Activated CD8-positive, alpha-beta memory T cell treated with anti-CD3 and anti-CD28 coated beads, Interleukin-2, amount 10 ng/mL, durations not matched to agents 7 days and 5 days (primary cell): ENCODE measurements at regions of chr15 and their contacts with region 1.

Region 1: DNA sequence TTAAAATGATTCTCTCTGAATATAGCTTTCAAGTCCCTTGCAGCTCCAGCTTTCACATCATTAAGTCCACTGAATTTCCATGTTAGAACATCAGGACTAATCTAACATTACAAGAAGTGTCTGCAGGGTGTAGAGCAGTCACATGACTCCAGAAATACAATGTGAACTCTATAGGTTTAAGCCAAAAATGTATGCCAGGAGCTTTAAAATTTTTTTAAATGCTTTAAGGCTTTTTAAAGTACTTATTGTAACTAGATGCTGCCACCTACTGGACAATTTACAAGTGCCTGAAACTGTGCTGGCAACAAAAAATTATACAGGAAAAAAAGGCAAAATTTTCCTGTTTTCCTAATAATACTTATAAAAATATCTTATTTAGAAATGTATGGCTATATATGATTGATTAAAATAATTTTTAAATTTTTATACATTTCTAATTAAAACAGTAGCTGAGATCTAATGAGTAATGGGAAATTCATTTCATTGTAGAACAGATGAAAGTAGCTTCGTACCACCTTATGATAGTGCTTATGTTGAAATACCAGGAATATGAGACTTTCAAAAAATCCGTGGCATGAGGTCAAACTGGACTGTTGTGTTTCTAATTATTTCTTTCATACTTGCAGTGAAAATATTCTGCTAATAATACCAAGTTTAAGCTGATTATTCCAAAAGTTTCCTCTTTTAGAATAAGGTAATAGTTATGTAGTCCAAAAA is 25.7 kb downstream of the FSIP1 start:
- DNase-seq: no peak
- ATAC-seq: no peak
- H3K4me3 Mint-ChIP-seq: no peak overlapping the region
- H3K27ac Mint-ChIP-seq: no peak overlapping the region
- H3K4me1 Mint-ChIP-seq: no peaks in the 10 kb centered on the region
- H3K27me3 Mint-ChIP-seq: peaks cover 32% of the 10 kb centered on the region

Region 2: DNA sequence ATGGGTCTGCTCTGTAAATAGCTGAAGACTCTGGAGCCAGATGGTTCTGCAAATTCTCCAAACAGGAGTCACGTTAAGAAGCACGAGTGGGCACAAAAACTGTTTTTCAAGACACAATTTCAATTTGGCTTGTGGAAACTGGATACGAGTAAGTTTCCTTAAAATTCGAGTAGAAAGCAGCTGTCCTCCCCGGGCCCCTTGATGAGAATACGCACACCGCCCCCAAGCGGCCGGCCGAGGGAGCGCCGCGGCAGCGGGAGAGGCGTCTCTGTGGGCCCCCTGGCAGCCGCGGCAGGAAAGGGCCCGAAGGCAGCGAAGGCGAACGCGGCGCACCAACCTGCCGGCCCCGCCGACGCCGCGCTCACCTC is 176.9 kb before region 1 on chr15:
- CTCF ChIA-PET with region 1: interaction called, 85 read pairs
- DNase-seq: peak; percentile 90
- ATAC-seq: peak; percentile 95
- H3K4me3 Mint-ChIP-seq: peak overlapping the region; percentile 35
- H3K27ac Mint-ChIP-seq: no peak overlapping the region
- H3K4me1 Mint-ChIP-seq: peaks cover 15% of the 10 kb centered on the region
- H3K27me3 Mint-ChIP-seq: peaks cover 61% of the 10 kb centered on the region

Region 3: GRCh38 chr15:39594056-39594763 is 162.8 kb before region 1 on chr15:
- CTCF ChIA-PET with region 1: interaction called, 30 read pairs
- DNase-seq: peak; percentile 58
- ATAC-seq: peak; percentile 60
- H3K4me3 Mint-ChIP-seq: no peak overlapping the region
- H3K27ac Mint-ChIP-seq: no peak overlapping the region
- H3K4me1 Mint-ChIP-seq: peaks cover 8% of the 10 kb centered on the region
- H3K27me3 Mint-ChIP-seq: peaks cover 7% of the 10 kb centered on the region

Region 4: DNA sequence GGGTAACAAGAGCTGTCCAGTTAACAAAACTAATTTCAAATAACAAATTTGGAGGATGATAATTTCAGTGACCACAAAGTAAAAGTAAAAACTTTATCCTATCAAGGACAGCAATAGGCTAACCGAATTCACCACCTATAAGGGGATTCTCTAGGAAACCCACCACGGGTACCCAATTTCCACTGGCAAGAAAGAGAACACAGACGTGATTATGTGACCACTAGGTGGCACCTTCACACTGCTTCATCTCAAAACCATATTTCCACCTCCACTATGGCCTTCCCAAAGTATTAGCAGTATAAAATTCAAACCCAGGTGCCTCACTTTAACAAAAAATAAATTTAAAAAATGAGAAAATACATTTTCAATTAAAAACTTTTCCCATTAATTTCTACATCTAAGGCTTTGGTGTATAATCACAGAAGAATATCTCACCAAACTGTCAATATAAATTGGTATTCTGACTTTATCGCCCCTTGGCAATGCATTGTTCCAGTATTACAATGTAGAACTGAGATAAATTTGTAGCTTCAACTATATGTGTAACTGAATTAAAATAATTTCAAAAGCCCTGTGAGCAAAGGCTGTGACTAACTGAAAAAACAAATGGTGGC is 70.9 kb before region 1 on chr15:
- CTCF ChIA-PET with region 1: interaction called, 36 read pairs
- DNase-seq: no peak
- ATAC-seq: peak; percentile 55
- H3K4me3 Mint-ChIP-seq: no peak overlapping the region
- H3K27ac Mint-ChIP-seq: no peak overlapping the region
- H3K4me1 Mint-ChIP-seq: peaks cover 4% of the 10 kb centered on the region
- H3K27me3 Mint-ChIP-seq: no peaks in the 10 kb centered on the region

Region 5: GRCh38 chr15:39770748-39771689 is 14.1 kb after region 1 on chr15:
- CTCF ChIA-PET with region 1: interaction called, 11 read pairs
- DNase-seq: no peak
- ATAC-seq: no peak
- H3K4me3 Mint-ChIP-seq: no peak overlapping the region
- H3K27ac Mint-ChIP-seq: no peak overlapping the region
- H3K4me1 Mint-ChIP-seq: peaks cover 17% of the 10 kb centered on the region
- H3K27me3 Mint-ChIP-seq: no peaks in the 10 kb centered on the region

Region 6: GRCh38 chr15:40038638-40039543 is 281.9 kb after region 1 on chr15 and contains the start of gene SRP14:
- CTCF ChIA-PET with region 1: no interaction called
- DNase-seq: peak; percentile 96
- ATAC-seq: peak; percentile 96
- H3K4me3 Mint-ChIP-seq: peak within 1 kb of the TSS; percentile 85
- H3K27ac Mint-ChIP-seq: peak within 1 kb of the TSS; percentile 94
- H3K4me1 Mint-ChIP-seq: peaks cover 50% of the 10 kb centered on the region
- H3K27me3 Mint-ChIP-seq: no peaks in the 10 kb centered on the region
- total RNA-seq, gene SRP14: 150 to 160 TPM